Calu3 (cell line): ENCODE measurements at regions of chr3 and their contacts with region 1.

Region 1: DNA sequence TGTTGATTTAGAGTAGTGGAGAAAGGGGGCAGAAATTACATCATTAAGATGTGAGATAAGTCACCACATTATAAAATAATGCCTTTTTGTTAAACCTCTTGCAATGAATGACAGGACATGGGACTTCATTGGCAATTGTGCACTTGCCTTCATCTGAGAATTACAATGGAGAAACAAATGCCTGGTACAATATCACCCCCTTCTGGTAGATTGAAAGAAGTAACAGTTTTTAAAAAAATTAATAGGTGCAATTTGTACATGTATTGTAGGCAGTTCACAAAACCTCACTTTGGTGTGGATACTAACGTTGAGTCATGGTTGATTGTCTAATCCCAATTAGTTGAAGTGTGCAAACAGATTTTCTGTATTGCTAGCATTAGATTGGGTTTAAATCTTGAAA is 4.6 kb upstream of the P2RY14 start:
- DNase-seq: no peak
- H3K4me3 Mint-ChIP-seq: no peak overlapping the region
- H3K27ac Mint-ChIP-seq: no peak overlapping the region
- H3K4me1 Mint-ChIP-seq: no peaks in the 10 kb centered on the region
- H3K27me3 Mint-ChIP-seq: no peaks in the 10 kb centered on the region
- CTCF ChIP-seq: peak; percentile 73

Region 2: GRCh38 chr3:151168269-151169094 is 114.4 kb before region 1 on chr3:
- CTCF ChIA-PET with region 1: interaction called, 7 read pairs
- intact Hi-C with region 1: loop called (anchors 1 kb)
- DNase-seq: peak; percentile 92
- H3K4me3 Mint-ChIP-seq: no peak overlapping the region
- H3K27ac Mint-ChIP-seq: no peak overlapping the region
- H3K4me1 Mint-ChIP-seq: no peaks in the 10 kb centered on the region
- H3K27me3 Mint-ChIP-seq: no peaks in the 10 kb centered on the region
- CTCF ChIP-seq: peak; percentile 99

Region 3: GRCh38 chr3:151210676-151211381 is 72.1 kb before region 1 on chr3:
- CTCF ChIA-PET with region 1: interaction called, 3 read pairs
- intact Hi-C with region 1: loop called (anchors 5 kb)
- DNase-seq: peak; percentile 29
- H3K4me3 Mint-ChIP-seq: peak overlapping the region; percentile 5
- H3K27ac Mint-ChIP-seq: no peak overlapping the region
- H3K4me1 Mint-ChIP-seq: peaks cover 13% of the 10 kb centered on the region
- H3K27me3 Mint-ChIP-seq: no peaks in the 10 kb centered on the region
- CTCF ChIP-seq: no peak